ENCODE measurements at regions of chr2 and their contacts with region 1.

Region 1: GRCh38 chr2:42828487-42829425 is 36.4 kb upstream of the HAAO start:
- H3K4me3 ChIP-seq: no peak overlapping the region
- H3K27ac ChIP-seq: no peak overlapping the region
- H3K4me1 ChIP-seq: no peaks in the 10 kb centered on the region
- CTCF ChIP-seq: peak; percentile 87

Region 2: DNA sequence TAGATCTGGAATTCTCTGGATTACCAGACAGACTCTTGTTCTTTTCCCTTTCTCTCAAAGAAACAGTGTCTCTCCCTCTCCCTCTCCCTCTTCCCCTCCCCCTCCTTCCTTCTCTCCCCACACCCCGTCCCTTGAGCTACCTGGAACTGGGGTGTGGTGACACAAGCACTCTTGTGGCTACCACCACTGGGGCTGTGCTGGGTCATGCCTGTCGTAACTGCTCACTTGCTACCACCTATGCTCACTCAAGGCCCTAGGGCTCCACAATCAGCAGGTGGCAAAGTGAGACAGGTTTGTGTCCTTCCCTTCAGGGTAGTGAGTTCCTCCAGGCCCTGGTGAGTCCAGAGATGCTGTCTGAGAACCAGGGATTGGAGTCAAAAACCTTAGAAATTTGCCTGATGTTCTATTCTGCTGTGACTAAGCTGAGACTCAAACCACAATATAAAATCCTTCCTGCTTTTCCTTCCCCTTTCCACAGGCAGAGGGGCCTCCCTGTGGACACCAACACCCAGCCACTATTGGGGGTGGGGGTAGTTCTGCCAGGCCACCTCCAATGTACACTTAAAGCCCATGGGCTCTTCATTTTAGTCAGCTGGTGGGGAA is 135.6 kb before region 1 on chr2:
- CTCF ChIA-PET with region 1: no interaction called
- POLR2A ChIA-PET with region 1: no interaction called
- H3K4me3 ChIP-seq: no peak overlapping the region
- H3K27ac ChIP-seq: no peak overlapping the region
- H3K4me1 ChIP-seq: no peaks in the 10 kb centered on the region
- CTCF ChIP-seq: no peak

Region 3: GRCh38 chr2:42839809-42840501 is 11.2 kb after region 1 on chr2:
- CTCF ChIA-PET with region 1: interaction called, 12 read pairs
- POLR2A ChIA-PET with region 1: no interaction called
- H3K4me3 ChIP-seq: no peak overlapping the region
- H3K27ac ChIP-seq: no peak overlapping the region
- H3K4me1 ChIP-seq: 0 out of 2 replicates have a peak, but pooled peaks cover under 1% of the 10 kb centered on the region
- CTCF ChIP-seq: no peak

Region 4: DNA sequence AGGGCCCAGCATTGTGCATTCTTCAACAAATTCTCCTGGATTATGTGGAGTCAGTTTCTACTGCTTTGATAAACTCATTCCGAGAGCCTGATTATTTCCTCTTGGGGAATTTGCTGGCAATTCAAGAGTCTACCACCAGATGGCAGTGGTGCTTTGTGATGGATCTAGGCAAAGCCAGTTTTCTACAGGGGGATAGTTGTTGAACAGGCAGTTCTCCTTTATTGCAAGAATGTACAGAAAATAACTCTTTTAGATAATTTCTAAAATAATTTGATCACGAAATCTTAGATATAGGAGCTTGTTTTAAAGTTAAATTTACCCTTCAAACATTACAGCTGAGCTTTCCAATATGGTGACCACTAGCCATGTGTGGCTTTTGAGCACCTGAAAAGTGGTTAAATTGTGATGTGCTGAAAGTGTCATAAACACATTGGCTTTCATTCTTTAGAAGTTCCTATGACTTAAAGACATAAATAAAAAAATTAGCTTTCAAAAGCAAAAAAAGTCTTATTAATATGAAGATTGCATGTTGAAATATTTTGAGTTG is 30.3 kb after region 1 on chr2:
- CTCF ChIA-PET with region 1: interaction called, 30 read pairs
- POLR2A ChIA-PET with region 1: no interaction called
- H3K4me3 ChIP-seq: no peak overlapping the region
- H3K27ac ChIP-seq: no peak overlapping the region
- H3K4me1 ChIP-seq: no peaks in the 10 kb centered on the region
- CTCF ChIP-seq: peak; percentile 61

Region 5: GRCh38 chr2:42944779-42945415 is 116.1 kb after region 1 on chr2:
- CTCF ChIA-PET with region 1: interaction called, 32 read pairs
- POLR2A ChIA-PET with region 1: no interaction called
- H3K4me3 ChIP-seq: no peak overlapping the region
- H3K27ac ChIP-seq: no peak overlapping the region
- H3K4me1 ChIP-seq: no peaks in the 10 kb centered on the region
- CTCF ChIP-seq: no peak

Region 6: GRCh38 chr2:43542285-43542937 is 713.7 kb after region 1 on chr2:
- CTCF ChIA-PET with region 1: interaction called, 13 read pairs
- POLR2A ChIA-PET with region 1: no interaction called
- H3K4me3 ChIP-seq: no peak overlapping the region
- H3K27ac ChIP-seq: no peak overlapping the region
- H3K4me1 ChIP-seq: no peaks in the 10 kb centered on the region
- CTCF ChIP-seq: no peak